ENCODE measurements at regions of chr17 and their contacts with region 1.

Region 1: DNA sequence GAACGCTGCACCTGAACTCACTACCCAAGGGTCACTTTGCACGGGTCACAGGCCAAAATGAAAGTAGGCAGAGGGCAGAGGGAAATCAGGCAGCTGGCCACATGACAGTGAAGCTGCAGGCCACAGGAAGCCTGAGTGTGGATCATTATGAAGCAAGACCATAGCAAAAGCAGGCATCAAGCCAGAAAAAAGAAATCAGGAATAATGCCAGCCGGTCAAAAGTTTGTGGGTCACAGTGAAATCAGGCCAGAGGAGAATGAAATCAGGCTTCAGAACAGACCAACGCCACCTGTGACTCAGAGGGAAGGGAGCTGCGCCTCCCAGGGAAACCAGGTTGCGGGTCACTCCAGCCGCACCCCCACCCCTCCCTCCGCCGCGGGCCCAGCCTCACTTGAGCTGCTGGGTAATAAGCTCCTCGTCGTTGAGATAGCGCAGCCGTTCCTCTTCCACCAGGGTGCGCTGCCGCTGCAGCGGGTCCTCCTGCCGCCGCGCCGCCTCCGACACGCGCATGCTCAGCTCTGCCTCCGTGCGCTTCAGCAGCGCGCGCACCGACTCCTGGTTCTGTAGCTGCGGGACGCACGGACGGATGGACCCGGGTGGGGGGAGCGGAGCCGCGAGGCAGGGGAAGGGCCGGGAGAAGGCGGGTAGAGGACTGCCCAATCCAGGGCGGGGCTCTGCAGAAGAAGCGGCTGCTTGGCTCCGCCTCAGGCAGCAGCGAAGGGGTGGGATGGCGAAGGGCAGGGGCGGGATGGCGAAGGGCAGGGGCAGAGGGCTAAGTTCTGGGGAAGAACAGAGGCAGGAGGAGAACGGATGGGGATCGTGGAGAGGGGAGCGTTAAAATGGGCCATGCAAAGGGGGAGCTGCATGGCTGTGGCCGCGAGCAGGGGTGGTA is 47.7 kb downstream of the SRCIN1 start:
- DNase-seq: peak; percentile 92
- ATAC-seq: peak; percentile 90
- H3K4me3 ChIP-seq: peak overlapping the region; percentile 46 to 61
- H3K27ac ChIP-seq: peak overlapping the region; percentile 47
- H3K4me1 ChIP-seq: peaks cover 21 to 42% of the 10 kb centered on the region in 2 experiments
- H3K27me3 ChIP-seq: no peaks in the 10 kb centered on the region
- CTCF ChIP-seq: peak; percentile 88 to 97 (median 95)
- POLR2A ChIP-seq: no peak
- RAD21 ChIP-seq: peak; percentile 93

Region 2: DNA sequence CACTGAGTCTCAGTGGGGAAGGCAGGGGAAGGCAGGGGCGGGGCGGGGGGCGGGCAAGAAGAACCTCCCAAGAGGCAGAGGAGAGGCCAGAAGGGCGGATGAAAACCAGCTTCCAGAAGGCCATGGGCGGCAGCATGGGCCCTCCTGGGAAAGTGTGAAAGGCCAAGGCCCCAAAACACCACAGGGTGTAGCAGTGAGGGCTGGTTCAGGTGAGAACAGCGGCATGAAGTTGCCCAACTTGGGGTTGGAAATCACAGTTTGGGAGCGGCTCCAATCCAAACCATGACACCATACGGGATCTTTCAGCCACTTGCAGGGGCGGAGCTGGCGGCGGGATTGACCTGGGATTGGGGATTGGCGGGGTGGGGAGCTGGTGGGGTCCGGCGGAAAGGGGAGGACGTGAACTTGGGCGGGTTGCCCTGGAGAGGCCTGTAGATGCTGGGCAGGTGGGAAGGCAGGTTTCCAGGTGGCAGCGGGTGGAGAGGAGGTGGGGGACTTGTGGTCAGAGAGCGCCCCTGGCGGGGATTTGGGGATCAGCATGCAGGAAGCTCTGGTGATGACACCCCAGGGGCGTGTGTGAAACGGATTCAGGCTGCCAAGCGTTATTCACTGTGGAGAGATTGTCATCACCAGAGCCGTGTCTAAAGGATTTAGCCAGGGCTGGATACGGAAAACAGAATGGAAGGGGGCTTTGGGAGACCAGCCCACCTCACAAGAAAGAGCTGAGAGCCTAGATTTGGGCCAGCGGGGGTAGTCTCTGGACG is 48.9 kb before region 1 on chr17:
- CTCF ChIA-PET with region 1: interaction called, 14 read pairs
- POLR2A ChIA-PET with region 1: interaction called, 4 read pairs
- RAD21 ChIA-PET with region 1: no interaction called
- intact Hi-C with region 1: no loop called
- DNase-seq: peak; percentile 65
- ATAC-seq: peak; percentile 89
- H3K4me3 ChIP-seq: no peak overlapping the region
- H3K27ac ChIP-seq: no peak overlapping the region
- H3K4me1 ChIP-seq: peaks cover 0 to 22% of the 10 kb centered on the region in 2 experiments; a peak in 2 of 4 replicates
- H3K27me3 ChIP-seq: no peaks in the 10 kb centered on the region
- CTCF ChIP-seq: peak; percentile 53 to 91 (median 81); a peak in 5 of 6 replicates
- POLR2A ChIP-seq: no peak
- RAD21 ChIP-seq: peak; percentile 52

Region 3: GRCh38 chr17:38544839-38545209 is 13.3 kb before region 1 on chr17:
- CTCF ChIA-PET with region 1: interaction called, 25 read pairs
- POLR2A ChIA-PET with region 1: interaction called, 4 read pairs
- RAD21 ChIA-PET with region 1: no interaction called
- intact Hi-C with region 1: no loop called
- DNase-seq: no peak
- ATAC-seq: no peak
- H3K4me3 ChIP-seq: no peak overlapping the region
- H3K27ac ChIP-seq: no peak overlapping the region
- H3K4me1 ChIP-seq: no peaks in the 10 kb centered on the region
- H3K27me3 ChIP-seq: no peaks in the 10 kb centered on the region
- CTCF ChIP-seq: no peak
- POLR2A ChIP-seq: no peak
- RAD21 ChIP-seq: no peak

Region 4: GRCh38 chr17:38584350-38584925 is 26.4 kb after region 1 on chr17:
- CTCF ChIA-PET with region 1: interaction called, 100 read pairs
- POLR2A ChIA-PET with region 1: interaction called, 4 read pairs
- RAD21 ChIA-PET with region 1: interaction called, 7 to 21 read pairs
- intact Hi-C with region 1: loop called (anchors 1 kb)
- DNase-seq: no peak
- ATAC-seq: peak; percentile 92
- H3K4me3 ChIP-seq: no peak overlapping the region
- H3K27ac ChIP-seq: 0 out of 2 replicates have a peak overlapping the region, but pooled peaks have one; percentile 19
- H3K4me1 ChIP-seq: peaks cover 22 to 33% of the 10 kb centered on the region in 2 experiments
- H3K27me3 ChIP-seq: no peaks in the 10 kb centered on the region
- CTCF ChIP-seq: peak; percentile 96 to 97 (median 96)
- POLR2A ChIP-seq: no peak
- RAD21 ChIP-seq: peak; percentile 95

Region 5: DNA sequence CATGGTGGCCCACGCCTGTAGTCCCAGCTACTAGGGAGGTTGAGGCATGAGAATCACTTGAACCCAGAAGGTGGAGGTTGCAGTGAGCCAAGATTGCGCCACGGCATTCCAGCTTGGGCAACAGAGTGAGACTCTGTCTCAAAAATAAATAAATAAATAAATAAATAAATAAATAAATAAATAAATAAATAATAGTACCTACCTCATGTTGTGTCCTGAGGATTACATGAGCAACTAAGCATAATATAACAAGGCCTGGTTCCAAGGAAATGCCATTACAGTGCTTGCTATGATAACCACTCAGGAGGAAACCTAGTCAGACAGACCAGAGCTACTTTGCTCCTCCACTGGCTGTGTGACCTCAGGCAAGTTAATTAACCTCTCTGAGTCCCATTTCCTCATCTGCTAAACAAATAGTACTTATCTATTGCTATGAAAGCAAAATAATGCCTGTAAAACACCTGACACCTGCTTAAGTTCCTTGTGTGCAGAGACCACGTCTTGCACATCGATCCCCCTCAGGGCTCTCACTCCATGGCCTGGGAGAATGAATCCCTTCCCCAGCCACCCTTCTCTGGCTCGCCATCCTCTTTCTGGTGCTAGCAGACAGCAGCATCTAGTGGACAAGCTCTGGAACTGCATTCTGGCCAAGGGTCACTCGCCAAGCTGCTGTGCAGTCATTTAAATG is 109.2 kb after region 1 on chr17:
- CTCF ChIA-PET with region 1: interaction called, 146 read pairs
- POLR2A ChIA-PET with region 1: no interaction called
- RAD21 ChIA-PET with region 1: interaction called, 10 to 11 read pairs
- intact Hi-C with region 1: loop called (anchors 2 kb)
- DNase-seq: peak; percentile 57
- ATAC-seq: peak; percentile 65
- H3K4me3 ChIP-seq: no peak overlapping the region
- H3K27ac ChIP-seq: no peak overlapping the region
- H3K4me1 ChIP-seq: peaks cover 6 to 20% of the 10 kb centered on the region in 2 experiments; a peak in 3 of 4 replicates
- H3K27me3 ChIP-seq: no peaks in the 10 kb centered on the region; the same call in 1 of the 2 replicates
- CTCF ChIP-seq: peak; percentile 98 to 100 (median 100)
- POLR2A ChIP-seq: no peak
- RAD21 ChIP-seq: peak; percentile 99